ENCODE measurements at regions of chr17 and their contacts with region 1.

Region 1: DNA sequence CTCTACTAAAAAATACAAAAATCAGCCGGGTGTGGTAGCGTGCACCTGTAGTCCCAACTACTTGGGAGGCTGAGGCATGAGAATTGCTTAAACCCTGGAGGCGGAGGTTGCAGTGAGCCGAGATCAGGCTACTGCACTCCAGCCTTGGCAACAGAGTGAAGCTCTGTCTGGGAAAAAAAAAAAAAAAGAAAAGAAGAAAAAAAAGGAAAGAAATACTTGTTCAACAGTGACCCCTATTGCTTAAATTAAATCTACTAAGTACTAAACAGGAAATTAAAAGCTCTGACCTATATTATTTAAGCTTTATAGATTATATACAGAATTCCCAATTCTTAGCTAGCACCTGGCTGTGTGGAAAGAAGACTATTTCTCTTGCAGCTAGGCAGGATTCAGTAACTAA is 48.9 kb downstream of the FBXL20 start:
- DNase-seq: no peak
- ATAC-seq: peak; percentile 66
- H3K4me3 ChIP-seq: no peak overlapping the region
- H3K27ac ChIP-seq: peak overlapping the region; percentile 60; the same call in 2 of the 3 replicates
- H3K4me1 ChIP-seq: peaks cover 0 to 6% of the 10 kb centered on the region in 2 experiments; a peak in 3 of 5 replicates
- H3K27me3 ChIP-seq: no peaks in the 10 kb centered on the region
- CTCF ChIP-seq: peak in 1 of 3 experiments; percentile 51; a peak in 2 of 6 replicates
- EP300 ChIP-seq: no peak
- POLR2A ChIP-seq: no peak
- RAD21 ChIP-seq: peak in 1 of 2 experiments; percentile 38; a peak in 2 of 4 replicates

Region 2: GRCh38 chr17:39335704-39336223 is 16.7 kb before region 1 on chr17:
- CTCF ChIA-PET with region 1: no interaction called
- POLR2A ChIA-PET with region 1: interaction called, 17 read pairs
- in situ Hi-C with region 1: no loop called
- intact Hi-C with region 1: no loop called
- DNase-seq: peak in 2 of 4 experiments; percentile 31 to 50
- ATAC-seq: peak; percentile 50
- H3K4me3 ChIP-seq: no peak overlapping the region
- H3K27ac ChIP-seq: peak overlapping the region; percentile 88
- H3K4me1 ChIP-seq: peaks cover 21 to 30% of the 10 kb centered on the region in 2 experiments
- H3K27me3 ChIP-seq: no peaks in the 10 kb centered on the region
- CTCF ChIP-seq: no peak
- EP300 ChIP-seq: no peak
- POLR2A ChIP-seq: no peak
- RAD21 ChIP-seq: no peak

Region 3: DNA sequence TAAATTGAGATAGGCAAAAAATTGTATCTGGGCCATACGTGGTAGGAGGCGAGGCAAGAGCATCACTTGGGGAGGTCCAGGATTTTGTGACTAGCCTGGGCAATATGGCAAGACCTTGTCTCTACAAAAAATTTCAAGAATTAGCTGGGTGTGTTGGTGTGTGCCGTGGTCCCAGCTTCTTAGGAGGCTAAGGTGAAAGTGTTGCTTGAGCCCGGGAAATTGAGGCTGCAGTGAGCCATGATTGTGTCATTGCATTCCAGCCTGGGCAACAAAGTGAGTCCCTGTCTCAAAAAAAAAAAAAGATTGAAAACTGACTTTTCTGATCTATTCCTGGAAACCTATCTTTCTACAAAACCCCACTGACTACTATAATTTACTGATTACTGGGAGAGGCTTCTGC is 135.4 kb after region 1 on chr17:
- CTCF ChIA-PET with region 1: no interaction called
- POLR2A ChIA-PET with region 1: no interaction called
- in situ Hi-C with region 1: no loop called
- intact Hi-C with region 1: no loop called
- DNase-seq: no peak
- ATAC-seq: no peak
- H3K4me3 ChIP-seq: no peak overlapping the region
- H3K27ac ChIP-seq: no peak overlapping the region
- H3K4me1 ChIP-seq: peaks cover 0 to 3% of the 10 kb centered on the region in 2 experiments; a peak in 2 of 5 replicates
- H3K27me3 ChIP-seq: no peaks in the 10 kb centered on the region
- CTCF ChIP-seq: no peak
- EP300 ChIP-seq: no peak
- POLR2A ChIP-seq: no peak
- RAD21 ChIP-seq: no peak

Measured in K562 (cell line).